ENCODE measurements at regions of chr22 and their contacts with region 1.

Region 1: DNA sequence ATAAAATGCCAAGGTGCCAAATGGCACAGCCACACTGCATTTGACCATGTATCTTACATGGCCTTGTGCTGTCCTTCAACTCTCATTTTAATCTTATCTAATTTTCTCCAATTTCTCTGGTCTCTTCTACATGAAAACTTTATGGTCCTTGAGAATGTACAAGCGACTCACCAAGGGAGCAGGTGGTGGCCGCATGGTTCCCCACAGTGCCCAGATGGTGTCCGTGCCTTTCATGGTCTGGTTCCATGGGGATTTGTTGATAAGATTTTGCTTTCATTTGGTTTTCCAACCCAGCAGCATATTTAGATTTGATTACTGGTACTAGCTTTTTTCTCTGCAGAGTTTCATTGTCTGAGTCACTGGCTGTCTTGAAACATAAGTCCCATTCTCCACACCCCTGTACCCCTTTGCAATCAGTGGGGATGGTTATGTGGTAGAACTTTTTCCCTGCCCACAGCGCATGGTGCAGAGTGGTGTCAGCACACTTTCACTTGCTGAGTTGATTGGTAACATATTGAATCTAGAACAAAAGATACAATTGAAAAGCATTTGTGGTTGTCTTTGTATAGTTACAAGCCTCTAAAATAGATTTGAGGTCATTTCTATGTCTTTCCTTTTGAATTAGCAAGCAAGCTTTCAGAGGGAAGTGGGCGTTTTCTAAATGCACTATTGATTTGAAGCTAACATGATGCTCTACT is 24.1 kb downstream of the ZNRF3 start:
- DNase-seq: no peak
- H3K4me3 Mint-ChIP-seq: no peak overlapping the region
- H3K27ac Mint-ChIP-seq: peak overlapping the region; percentile 76
- H3K4me1 Mint-ChIP-seq: peaks cover 25% of the 10 kb centered on the region
- H3K27me3 Mint-ChIP-seq: peaks cover 64% of the 10 kb centered on the region

Region 2: GRCh38 chr22:28741758-28742561 is 165.5 kb before region 1 on chr22 and contains the starts of genes CHEK2 and HSCB:
- intact Hi-C with region 1: loop called (anchors 5 kb)
- DNase-seq: peak; percentile 97
- H3K4me3 Mint-ChIP-seq: peak within 1 kb of the TSS; percentile 87
- H3K27ac Mint-ChIP-seq: peak within 1 kb of the TSS; percentile 83
- H3K4me1 Mint-ChIP-seq: peaks cover 36% of the 10 kb centered on the region
- H3K27me3 Mint-ChIP-seq: no peaks in the 10 kb centered on the region
- total RNA-seq, gene CHEK2: 33.7 and 33.8 TPM in 2 replicates
- total RNA-seq, gene HSCB: 14.1 and 14.6 TPM in 2 replicates

Region 3: GRCh38 chr22:28772633-28773460 is 134.6 kb before region 1 on chr22 and contains the start of gene CCDC117:
- intact Hi-C with region 1: loop called (anchors 1 kb)
- DNase-seq: peak; percentile 89
- H3K4me3 Mint-ChIP-seq: peak within 1 kb of the TSS; percentile 99
- H3K27ac Mint-ChIP-seq: peak within 1 kb of the TSS; percentile 100
- H3K4me1 Mint-ChIP-seq: peaks cover 19% of the 10 kb centered on the region
- H3K27me3 Mint-ChIP-seq: no peaks in the 10 kb centered on the region
- total RNA-seq, gene CCDC117: 33.9 and 38.6 TPM in 2 replicates

Region 4: GRCh38 chr22:28810821-28811491 is 96.5 kb before region 1 on chr22:
- intact Hi-C with region 1: loop called (anchors 5 kb)
- DNase-seq: peak; percentile 50
- H3K4me3 Mint-ChIP-seq: peak overlapping the region; percentile 59
- H3K27ac Mint-ChIP-seq: peak overlapping the region; percentile 82
- H3K4me1 Mint-ChIP-seq: peaks cover 69% of the 10 kb centered on the region
- H3K27me3 Mint-ChIP-seq: no peaks in the 10 kb centered on the region

Region 5: DNA sequence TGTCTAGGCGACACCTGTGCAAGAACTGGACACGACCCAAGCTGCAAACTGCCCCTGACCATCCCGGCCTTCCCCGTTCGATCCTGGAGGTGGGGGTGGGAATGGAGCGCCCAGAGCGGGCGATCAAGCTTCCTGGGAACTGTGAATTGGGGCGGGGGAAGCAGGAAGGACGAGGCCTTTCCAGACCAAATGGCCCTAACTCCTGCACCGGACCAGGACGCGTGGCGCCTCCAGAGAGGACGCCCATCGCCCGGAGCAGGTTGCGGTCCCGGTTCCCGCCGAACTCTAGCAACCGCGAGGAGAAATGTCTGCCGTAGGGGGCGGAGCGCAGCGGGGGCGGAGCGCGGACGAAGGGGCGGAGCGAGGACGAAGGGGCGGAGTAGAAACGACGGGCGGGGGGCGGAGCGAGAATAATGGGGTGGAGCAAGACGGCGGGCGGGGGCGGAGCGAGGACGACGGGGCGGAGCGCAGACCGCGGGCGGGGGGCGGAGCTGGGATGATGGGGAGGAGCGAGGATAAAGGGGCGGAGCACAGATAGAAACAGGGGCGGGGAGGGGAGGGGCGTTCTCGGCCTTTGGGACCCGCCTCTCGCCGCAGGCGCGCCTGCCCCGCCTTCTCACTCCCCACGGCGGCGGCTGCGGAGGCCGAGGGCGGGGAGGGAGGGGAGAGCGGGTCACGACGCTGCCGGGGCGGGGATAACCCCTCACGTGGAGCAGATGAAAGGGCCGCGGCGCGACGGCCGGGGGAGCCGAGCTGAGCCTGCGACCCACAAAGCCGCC is 24.4 kb before region 1 on chr22 and contains the start of gene ZNRF3:
- intact Hi-C with region 1: loop called (anchors 2 kb)
- DNase-seq: peak; percentile 76
- H3K4me3 Mint-ChIP-seq: peak within 1 kb of the TSS; percentile 72
- H3K27ac Mint-ChIP-seq: no peak within 1 kb of the TSS
- H3K4me1 Mint-ChIP-seq: peaks cover 12% of the 10 kb centered on the region
- H3K27me3 Mint-ChIP-seq: peaks cover 63% of the 10 kb centered on the region
- total RNA-seq, gene ZNRF3: 0.82 and 1.1 TPM in 2 replicates

Region 6: GRCh38 chr22:28951969-28952521 is 44.6 kb after region 1 on chr22:
- intact Hi-C with region 1: loop called (anchors 1 kb)
- DNase-seq: no peak
- H3K4me3 Mint-ChIP-seq: no peak overlapping the region
- H3K27ac Mint-ChIP-seq: no peak overlapping the region
- H3K4me1 Mint-ChIP-seq: peaks cover 11% of the 10 kb centered on the region
- H3K27me3 Mint-ChIP-seq: peaks cover 79% of the 10 kb centered on the region

Region 7: DNA sequence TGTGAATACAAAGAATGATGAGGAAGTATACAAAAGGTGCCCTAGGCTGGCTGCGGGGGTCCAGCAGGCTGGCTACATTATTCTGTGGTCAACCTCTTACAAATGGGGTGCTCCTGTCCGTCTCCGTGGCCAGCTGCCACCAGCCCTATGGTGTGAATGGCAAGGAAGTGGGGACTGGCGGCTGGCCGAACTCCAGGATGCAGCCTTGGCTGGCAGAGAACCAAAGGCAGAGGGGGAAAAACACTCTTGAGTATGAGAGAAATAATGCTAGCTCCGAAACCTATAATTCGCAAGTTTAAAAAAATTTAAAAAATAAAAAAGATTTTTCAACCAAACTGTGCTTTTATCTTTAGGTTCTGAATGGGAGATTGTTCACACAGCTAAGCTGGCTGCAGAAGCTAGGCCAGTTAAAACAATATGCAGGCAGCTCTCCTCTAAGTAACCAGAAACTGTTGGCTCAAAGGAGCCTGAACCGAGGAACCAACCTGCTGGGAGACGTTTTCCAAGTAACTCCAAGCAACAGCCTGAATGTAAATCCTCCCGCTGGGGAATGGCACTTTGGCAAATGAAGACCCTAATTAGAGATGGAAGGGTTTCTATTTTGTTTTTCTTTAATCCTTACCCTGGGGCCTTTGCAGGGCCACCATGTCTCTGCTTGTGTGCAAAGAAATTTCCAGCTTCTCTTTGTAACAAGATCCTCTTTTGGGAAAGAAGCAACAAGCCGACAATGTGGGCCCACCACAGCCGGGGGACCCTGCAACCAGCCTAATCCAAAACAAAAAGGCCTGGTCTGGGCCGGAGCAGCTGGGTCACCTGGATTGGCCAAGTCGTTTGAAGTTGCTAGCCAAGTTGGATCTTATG is 104.0 kb after region 1 on chr22:
- intact Hi-C with region 1: no loop called
- DNase-seq: no peak
- H3K4me3 Mint-ChIP-seq: no peak overlapping the region
- H3K27ac Mint-ChIP-seq: no peak overlapping the region
- H3K4me1 Mint-ChIP-seq: peaks cover 5% of the 10 kb centered on the region
- H3K27me3 Mint-ChIP-seq: peaks cover 21% of the 10 kb centered on the region

Region 8: DNA sequence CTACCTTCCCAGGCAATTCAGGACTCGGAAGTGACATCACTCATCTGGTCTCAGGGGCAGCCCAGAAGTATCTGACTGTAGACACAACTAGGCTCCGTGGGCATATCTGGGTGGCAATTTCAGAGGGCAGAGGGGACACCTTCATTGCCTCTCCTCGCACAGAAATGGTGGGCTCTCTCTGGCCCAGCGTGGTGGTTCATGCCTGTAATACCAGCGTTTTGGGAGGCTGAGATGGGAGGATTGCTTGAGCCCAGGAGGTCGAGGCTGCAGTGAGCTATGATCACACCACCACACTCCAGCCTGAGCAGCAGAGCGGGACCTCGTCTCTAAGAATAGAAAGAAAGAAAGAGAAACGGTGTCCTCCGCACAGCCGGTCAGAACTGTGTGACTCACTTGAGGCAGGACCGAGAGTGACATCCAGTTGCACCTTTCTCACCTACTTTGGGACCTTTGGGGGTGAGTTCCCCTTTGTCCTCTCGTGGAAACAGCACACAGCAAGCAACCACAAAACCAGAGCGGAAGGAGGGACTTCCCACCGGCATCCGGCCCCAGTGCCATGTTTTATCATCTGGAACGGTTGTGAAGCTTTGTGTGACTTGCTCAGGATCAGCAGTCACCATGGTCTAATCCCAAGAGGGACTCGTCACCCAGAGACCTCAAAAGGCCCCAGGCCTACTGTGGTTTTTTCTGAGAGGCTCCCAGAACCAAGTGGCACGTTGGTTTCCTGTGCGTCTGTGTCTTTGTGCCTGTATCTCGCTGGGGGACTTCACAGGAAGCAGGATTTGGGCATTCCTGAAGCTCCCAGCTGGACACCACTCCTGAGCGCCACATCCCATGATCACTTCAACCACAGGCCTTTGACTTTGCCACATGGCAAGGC is 259.8 kb after region 1 on chr22:
- intact Hi-C with region 1: loop called (anchors 5 kb)
- DNase-seq: peak; percentile 58
- H3K4me3 Mint-ChIP-seq: peak overlapping the region; percentile 27
- H3K27ac Mint-ChIP-seq: peak overlapping the region; percentile 52
- H3K4me1 Mint-ChIP-seq: peaks cover 21% of the 10 kb centered on the region
- H3K27me3 Mint-ChIP-seq: peaks cover 14% of the 10 kb centered on the region